CD4-positive, alpha-beta T cell (primary cell): ENCODE measurements at regions of chr3 and their contacts with region 1.

Region 1: GRCh38 chr3:4826237-4827100 is 152.8 kb upstream of the BHLHE40 start:
- DNase-seq: no peak
- ATAC-seq: no peak
- H3K4me3 ChIP-seq: peak overlapping the region; percentile 30
- H3K4me3 Mint-ChIP-seq: peak overlapping the region; percentile 82
- H3K27ac ChIP-seq: no peak overlapping the region
- H3K27ac Mint-ChIP-seq: peak overlapping the region; percentile 92
- H3K4me1 ChIP-seq: peaks cover 87% of the 10 kb centered on the region
- H3K4me1 Mint-ChIP-seq: peaks cover 95% of the 10 kb centered on the region
- H3K27me3 ChIP-seq: no peaks in the 10 kb centered on the region
- H3K27me3 Mint-ChIP-seq: no peaks in the 10 kb centered on the region
- CTCF ChIP-seq: no peak

Region 2: DNA sequence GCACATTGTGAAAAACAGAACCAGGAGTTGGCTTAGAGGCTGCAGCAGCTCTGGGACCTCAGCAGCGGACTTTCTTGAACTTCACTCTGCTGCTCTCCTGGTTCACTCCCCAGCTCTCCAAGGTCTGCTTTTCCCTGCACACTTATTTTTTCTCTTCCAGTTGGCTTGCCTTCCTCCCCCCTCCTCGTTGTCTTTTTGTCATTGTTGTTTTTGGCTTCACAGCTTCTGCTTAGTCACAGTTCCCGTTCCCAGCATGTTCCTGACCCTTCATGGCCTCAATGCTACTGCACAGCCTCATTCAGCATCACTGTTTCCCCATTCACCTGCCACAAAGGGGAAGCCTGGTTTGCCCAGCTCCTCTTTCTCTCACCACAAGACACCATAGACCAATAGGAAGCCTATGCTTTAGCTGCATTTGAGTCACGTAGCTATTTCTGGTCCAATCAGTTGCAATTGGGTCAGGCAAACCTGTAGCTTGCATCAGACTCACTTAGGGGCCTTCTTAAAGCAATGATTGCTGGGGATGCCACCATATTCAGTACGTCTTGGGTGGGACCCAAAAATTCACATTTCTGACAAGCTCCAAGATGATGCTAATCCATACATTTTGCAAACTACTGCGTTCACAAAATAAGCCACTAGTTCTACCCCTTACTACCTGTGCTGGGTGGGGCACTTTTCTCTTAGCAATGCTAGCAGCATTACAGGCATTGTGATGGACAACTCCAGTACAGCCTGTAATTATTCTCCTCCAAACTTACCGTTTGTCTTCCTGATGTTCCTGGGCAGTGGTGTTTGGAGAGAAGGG is 351.6 kb before region 1 on chr3:
- CTCF ChIA-PET with region 1: no interaction called
- POLR2A ChIA-PET with region 1: no interaction called
- intact Hi-C with region 1: no loop called
- DNase-seq: peak in 3 of 14 experiments; percentile 38 to 67 (median 58)
- ATAC-seq: peak; percentile 41
- H3K4me3 ChIP-seq: no peak overlapping the region
- H3K4me3 Mint-ChIP-seq: no peak overlapping the region
- H3K27ac ChIP-seq: no peak overlapping the region
- H3K27ac Mint-ChIP-seq: no peak overlapping the region
- H3K4me1 ChIP-seq: no peaks in the 10 kb centered on the region
- H3K4me1 Mint-ChIP-seq: no peaks in the 10 kb centered on the region
- H3K27me3 ChIP-seq: peaks cover 0 to 11% of the 10 kb centered on the region in 2 experiments
- H3K27me3 Mint-ChIP-seq: peaks cover 23% of the 10 kb centered on the region
- CTCF ChIP-seq: no peak

Region 3: DNA sequence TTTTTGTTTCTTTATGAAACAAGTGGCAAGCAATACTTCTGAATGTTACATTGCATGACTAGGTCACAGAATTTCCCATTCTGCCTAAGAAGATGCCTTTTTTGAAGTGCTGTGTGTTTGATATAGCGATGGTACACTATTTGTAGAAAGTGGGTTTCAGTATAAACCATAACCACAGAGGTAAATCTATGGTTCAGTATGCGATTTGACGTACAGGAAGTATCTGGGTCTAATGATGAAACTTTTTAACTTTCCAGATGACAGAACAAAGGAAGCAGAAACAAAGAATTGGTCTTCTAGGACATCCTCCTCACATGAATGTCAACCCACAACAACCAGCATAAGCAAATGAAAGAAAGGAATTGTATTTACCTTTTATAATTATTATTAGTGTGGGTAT is 19.4 kb after region 1 on chr3:
- CTCF ChIA-PET with region 1: interaction called, 5 read pairs
- POLR2A ChIA-PET with region 1: interaction called, 10 read pairs
- intact Hi-C with region 1: loop called in 1 of 2 experiments (anchors 1 kb)
- DNase-seq: peak in 3 of 14 experiments; percentile 77 to 85 (median 83)
- ATAC-seq: peak; percentile 83
- H3K4me3 ChIP-seq: no peak overlapping the region
- H3K4me3 Mint-ChIP-seq: peak overlapping the region; percentile 14
- H3K27ac ChIP-seq: peak overlapping the region in 1 of 2 donors; percentile 18
- H3K27ac Mint-ChIP-seq: peak overlapping the region; percentile 83
- H3K4me1 ChIP-seq: peaks cover 52% of the 10 kb centered on the region
- H3K4me1 Mint-ChIP-seq: peaks cover 91% of the 10 kb centered on the region
- H3K27me3 ChIP-seq: no peaks in the 10 kb centered on the region
- H3K27me3 Mint-ChIP-seq: no peaks in the 10 kb centered on the region
- CTCF ChIP-seq: no peak

Region 4: DNA sequence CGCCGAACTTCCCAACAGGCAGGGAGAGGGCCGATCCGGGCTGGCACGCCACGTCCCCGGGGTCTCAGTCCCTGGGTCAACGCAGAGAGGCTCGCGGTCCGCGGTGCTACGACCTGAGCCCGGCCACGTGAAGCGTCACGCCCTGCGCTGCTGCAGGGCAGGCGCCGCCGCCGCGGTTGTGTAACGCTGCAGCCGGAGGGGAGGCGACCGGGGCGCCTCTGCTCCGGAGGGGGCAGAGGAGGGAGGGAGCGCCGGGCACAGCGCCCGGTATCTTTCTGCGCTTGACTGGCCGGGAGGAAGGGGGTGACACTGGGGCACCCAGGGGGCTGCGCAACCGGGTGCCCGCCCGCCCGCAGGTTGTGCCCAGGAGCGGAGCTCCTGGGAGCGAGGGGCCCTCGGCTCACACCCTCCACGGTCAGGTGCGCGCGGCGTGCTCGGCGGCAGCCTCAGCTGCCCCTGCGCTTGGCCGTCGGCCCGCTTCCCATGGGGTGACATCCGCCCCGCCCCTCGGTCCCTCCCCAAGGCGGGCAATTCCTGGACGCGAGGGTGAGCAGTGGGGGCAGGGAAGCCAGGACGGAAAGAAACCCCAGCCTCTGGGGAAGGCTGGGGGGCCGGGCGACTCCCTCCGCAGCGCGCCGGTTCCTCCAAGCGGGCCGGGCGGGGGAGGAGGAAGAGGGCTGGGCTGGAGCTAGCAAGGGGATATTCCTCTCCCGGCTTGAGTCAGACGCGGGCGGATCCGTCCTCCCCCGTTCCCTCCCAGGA is 151.9 kb after region 1 on chr3:
- CTCF ChIA-PET with region 1: interaction called, 29 read pairs
- POLR2A ChIA-PET with region 1: interaction called, 38 read pairs
- intact Hi-C with region 1: loop called (anchors 1 to 2 kb)
- DNase-seq: peak; percentile 24 to 93 (median 62)
- ATAC-seq: peak; percentile 45
- H3K4me3 ChIP-seq: peak overlapping the region; percentile 95
- H3K4me3 Mint-ChIP-seq: peak overlapping the region; percentile 98
- H3K27ac ChIP-seq: peak overlapping the region; percentile 84 to 91
- H3K27ac Mint-ChIP-seq: peak overlapping the region; percentile 96
- H3K4me1 ChIP-seq: peaks cover 61% of the 10 kb centered on the region
- H3K4me1 Mint-ChIP-seq: peaks cover 52% of the 10 kb centered on the region
- H3K27me3 ChIP-seq: no peaks in the 10 kb centered on the region
- H3K27me3 Mint-ChIP-seq: no peaks in the 10 kb centered on the region
- CTCF ChIP-seq: no peak

Region 5: DNA sequence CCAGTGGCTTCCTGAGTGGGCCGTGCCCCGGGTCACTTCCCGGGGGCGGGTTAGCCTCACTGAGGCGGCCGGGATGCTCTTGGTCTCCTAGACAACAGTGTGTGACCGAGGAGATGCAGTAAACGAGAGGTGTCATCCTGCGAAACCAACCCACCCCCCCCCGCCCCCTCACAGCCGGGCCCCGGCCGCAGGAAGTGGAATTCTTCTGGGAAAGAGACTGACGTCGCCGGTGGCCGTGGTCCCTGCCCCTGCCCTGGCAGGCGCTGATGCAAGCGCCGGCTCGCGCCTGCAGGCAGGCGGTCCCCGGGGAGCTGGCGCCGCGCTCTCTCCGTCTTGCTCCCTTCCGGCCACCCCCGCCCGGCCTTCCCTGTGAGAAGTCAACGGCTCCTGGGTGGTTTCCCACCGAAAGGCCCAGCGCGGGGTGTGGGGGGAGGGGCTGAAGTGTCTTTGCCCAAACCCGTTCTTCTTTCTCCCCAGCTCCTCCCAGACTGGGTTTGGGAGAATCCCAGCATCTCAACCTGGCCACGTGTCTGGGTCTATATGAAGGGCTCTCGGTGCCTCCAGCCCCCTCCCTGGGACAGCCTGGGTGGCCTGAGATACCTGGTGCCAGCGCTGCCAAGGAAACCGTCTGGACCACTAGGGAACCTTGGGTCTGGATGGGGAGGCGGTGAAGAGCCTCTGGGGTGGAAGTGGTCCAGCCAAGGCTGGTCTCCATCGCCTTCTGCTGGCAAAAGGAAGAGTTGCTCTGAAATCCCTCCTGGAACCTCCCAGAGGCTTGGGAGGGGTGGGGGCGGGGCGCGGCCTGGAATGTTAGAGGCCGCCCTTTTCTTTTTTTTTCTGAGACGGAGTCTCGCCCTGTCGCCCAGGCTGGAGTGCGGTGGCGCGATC is 200.1 kb after region 1 on chr3:
- CTCF ChIA-PET with region 1: interaction called, 5 read pairs
- POLR2A ChIA-PET with region 1: interaction called, 4 read pairs
- intact Hi-C with region 1: loop called (anchors 1 to 5 kb)
- DNase-seq: peak; percentile 33 to 87 (median 48)
- ATAC-seq: peak; percentile 75
- H3K4me3 ChIP-seq: peak overlapping the region; percentile 61
- H3K4me3 Mint-ChIP-seq: peak overlapping the region; percentile 86
- H3K27ac ChIP-seq: peak overlapping the region in 1 of 2 donors; percentile 44
- H3K27ac Mint-ChIP-seq: peak overlapping the region; percentile 75
- H3K4me1 ChIP-seq: peaks cover 16% of the 10 kb centered on the region
- H3K4me1 Mint-ChIP-seq: peaks cover 11% of the 10 kb centered on the region
- H3K27me3 ChIP-seq: no peaks in the 10 kb centered on the region
- H3K27me3 Mint-ChIP-seq: no peaks in the 10 kb centered on the region
- CTCF ChIP-seq: peak; percentile 68